Naive thymus-derived CD4-positive, alpha-beta T cell (primary cell): ENCODE measurements at regions of chr1 and their contacts with region 1.

Region 1: DNA sequence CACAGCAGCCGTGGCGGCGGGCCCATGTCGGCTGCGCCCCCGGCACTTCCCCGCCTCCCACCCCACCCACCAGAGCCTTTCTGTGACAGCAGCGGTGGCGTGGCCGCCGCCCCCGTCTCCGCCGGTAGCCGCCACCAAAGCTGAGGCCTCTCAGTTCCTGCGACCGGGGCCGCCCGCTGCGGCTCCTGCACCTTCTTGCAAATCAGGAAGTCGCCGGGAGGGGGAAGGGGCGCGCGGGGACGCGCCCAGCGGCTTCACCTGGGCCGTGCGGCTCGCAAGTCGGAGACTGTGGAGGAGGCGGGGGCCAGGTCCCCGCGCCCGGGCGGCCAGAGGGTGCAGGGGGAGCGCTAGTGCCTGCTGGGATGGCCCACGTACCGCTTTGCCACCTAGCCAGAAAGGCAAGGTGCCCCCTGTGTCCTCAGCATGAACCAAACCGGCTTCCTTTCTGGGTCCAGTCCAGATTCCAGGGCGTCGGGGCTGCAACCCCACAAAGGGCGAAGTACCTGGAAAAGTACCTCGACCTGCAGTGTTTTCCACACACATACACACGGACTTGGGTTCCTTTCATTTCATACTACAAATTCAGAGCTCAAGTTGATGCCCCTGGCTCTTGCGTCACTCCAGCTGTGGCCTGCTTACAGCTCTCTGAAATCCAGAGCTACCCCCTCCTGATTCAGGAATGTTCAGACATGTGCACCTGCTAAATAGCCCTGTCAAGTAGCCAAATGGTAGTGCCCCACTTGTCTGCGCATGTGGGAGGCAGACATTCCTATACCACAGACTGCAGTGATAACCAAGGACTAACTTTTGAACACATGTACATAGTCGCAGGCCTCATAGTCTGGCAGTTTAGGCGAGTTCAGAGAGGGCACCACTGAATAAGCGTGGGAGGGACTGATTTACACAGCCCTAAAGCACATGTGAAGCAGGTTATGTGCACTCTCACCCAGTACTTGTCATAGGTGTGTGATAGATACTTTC is at the start of gene DENND1B:
- DNase-seq: peak; percentile 64 to 83 (median 81)
- ATAC-seq: peak; percentile 80
- H3K4me3 ChIP-seq: peak within 1 kb of the TSS; percentile 68
- H3K4me3 Mint-ChIP-seq: peak within 1 kb of the TSS; percentile 87 to 98 (median 92)
- H3K27ac ChIP-seq: peak within 1 kb of the TSS; percentile 74
- H3K27ac Mint-ChIP-seq: peak within 1 kb of the TSS; percentile 90 to 98 (median 97)
- H3K4me1 ChIP-seq: peaks cover 19 to 34% of the 10 kb centered on the region in 2 donors
- H3K4me1 Mint-ChIP-seq: peaks cover 32 to 72% (median 62%) of the 10 kb centered on the region in 7 donors
- H3K27me3 ChIP-seq: no peaks in the 10 kb centered on the region
- H3K27me3 Mint-ChIP-seq: no peaks in the 10 kb centered on the region
- total RNA-seq, gene DENND1B: 14.2 to 28.7 (median 23.2) TPM

Region 2: GRCh38 chr1:197521118-197521739 is 254.3 kb before region 1 on chr1:
- CTCF ChIA-PET with region 1: no interaction called
- POLR2A ChIA-PET with region 1: no interaction called
- intact Hi-C with region 1: loop called in 1 of 2 experiments (anchors 5 kb)
- DNase-seq: peak in 7 of 9 donors; percentile 2 to 34 (median 24)
- ATAC-seq: no peak
- H3K4me3 ChIP-seq: no peak overlapping the region
- H3K4me3 Mint-ChIP-seq: no peak overlapping the region
- H3K27ac ChIP-seq: no peak overlapping the region
- H3K27ac Mint-ChIP-seq: no peak overlapping the region
- H3K4me1 ChIP-seq: no peaks in the 10 kb centered on the region
- H3K4me1 Mint-ChIP-seq: peaks cover 0 to 5% (median 0%) of the 10 kb centered on the region in 7 donors
- H3K27me3 ChIP-seq: no peaks in the 10 kb centered on the region
- H3K27me3 Mint-ChIP-seq: no peaks in the 10 kb centered on the region

Region 3: GRCh38 chr1:197733324-197733723 is 42.2 kb before region 1 on chr1:
- CTCF ChIA-PET with region 1: no interaction called
- POLR2A ChIA-PET with region 1: no interaction called
- intact Hi-C with region 1: loop called in 1 of 2 experiments (anchors 5 kb)
- DNase-seq: no peak
- ATAC-seq: no peak
- H3K4me3 ChIP-seq: no peak overlapping the region
- H3K4me3 Mint-ChIP-seq: no peak overlapping the region
- H3K27ac ChIP-seq: no peak overlapping the region
- H3K27ac Mint-ChIP-seq: peak overlapping the region in 1 of 9 donors; percentile 15
- H3K4me1 ChIP-seq: no peaks in the 10 kb centered on the region
- H3K4me1 Mint-ChIP-seq: peaks cover 7 to 59% (median 35%) of the 10 kb centered on the region in 7 donors
- H3K27me3 ChIP-seq: no peaks in the 10 kb centered on the region
- H3K27me3 Mint-ChIP-seq: no peaks in the 10 kb centered on the region

Region 4: DNA sequence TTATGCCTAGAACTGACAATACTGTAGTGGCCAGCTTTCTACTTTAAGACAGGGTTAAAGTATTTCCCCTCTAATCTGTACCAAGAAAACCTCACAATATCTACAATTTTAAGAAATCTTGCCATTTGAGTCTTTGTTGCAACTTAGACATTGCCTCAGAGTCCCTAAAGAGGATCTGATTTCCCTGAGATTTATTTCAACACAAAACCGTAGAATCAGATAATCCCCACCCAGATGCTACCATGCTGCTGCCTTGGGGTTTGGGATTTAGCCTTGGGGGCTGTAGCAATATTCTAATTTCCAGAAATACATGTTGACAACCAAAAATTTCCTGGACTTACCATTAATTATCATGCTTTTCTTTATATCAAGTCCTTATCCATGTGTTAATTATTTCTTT is 50.0 kb after region 1 on chr1:
- CTCF ChIA-PET with region 1: no interaction called
- POLR2A ChIA-PET with region 1: no interaction called
- intact Hi-C with region 1: loop called in 1 of 2 experiments (anchors 5 kb)
- DNase-seq: no peak
- ATAC-seq: no peak
- H3K4me3 ChIP-seq: no peak overlapping the region
- H3K4me3 Mint-ChIP-seq: no peak overlapping the region
- H3K27ac ChIP-seq: no peak overlapping the region
- H3K27ac Mint-ChIP-seq: no peak overlapping the region
- H3K4me1 ChIP-seq: no peaks in the 10 kb centered on the region
- H3K4me1 Mint-ChIP-seq: no peaks in the 10 kb centered on the region
- H3K27me3 ChIP-seq: no peaks in the 10 kb centered on the region
- H3K27me3 Mint-ChIP-seq: peaks cover 0 to 21% (median 0%) of the 10 kb centered on the region in 5 donors

Region 5: GRCh38 chr1:197902454-197903195 is 127.1 kb after region 1 on chr1 and contains the start of gene C1orf53:
- CTCF ChIA-PET with region 1: no interaction called
- POLR2A ChIA-PET with region 1: no interaction called
- intact Hi-C with region 1: loop called (anchors 1 to 2 kb)
- DNase-seq: peak; percentile 58 to 87 (median 74)
- ATAC-seq: peak; percentile 94
- H3K4me3 ChIP-seq: peak within 1 kb of the TSS; percentile 71
- H3K4me3 Mint-ChIP-seq: peak within 1 kb of the TSS; percentile 79 to 97 (median 92)
- H3K27ac ChIP-seq: peak within 1 kb of the TSS; percentile 50
- H3K27ac Mint-ChIP-seq: peak within 1 kb of the TSS; percentile 7 to 82 (median 79)
- H3K4me1 ChIP-seq: peaks cover 4% of the 10 kb centered on the region in 2 donors
- H3K4me1 Mint-ChIP-seq: peaks cover 6 to 19% (median 14%) of the 10 kb centered on the region in 7 donors
- H3K27me3 ChIP-seq: peaks cover 0 to 23% of the 10 kb centered on the region in 2 donors
- H3K27me3 Mint-ChIP-seq: peaks cover 46 to 68% (median 54%) of the 10 kb centered on the region in 5 donors
- total RNA-seq, gene C1orf53: not detected

Region 6: GRCh38 chr1:198520524-198521254 is 745.1 kb after region 1 on chr1:
- CTCF ChIA-PET with region 1: no interaction called
- POLR2A ChIA-PET with region 1: no interaction called
- intact Hi-C with region 1: loop called in 1 of 2 experiments (anchors 5 kb)
- DNase-seq: peak in 3 of 9 donors; percentile 11 to 27 (median 18)
- ATAC-seq: peak; percentile 66
- H3K4me3 ChIP-seq: peak overlapping the region; percentile 44
- H3K4me3 Mint-ChIP-seq: peak overlapping the region; percentile 65 to 79 (median 71)
- H3K27ac ChIP-seq: peak overlapping the region; percentile 81
- H3K27ac Mint-ChIP-seq: peak overlapping the region; percentile 48 to 95 (median 93)
- H3K4me1 ChIP-seq: peaks cover 40 to 48% of the 10 kb centered on the region in 2 donors
- H3K4me1 Mint-ChIP-seq: peaks cover 30 to 77% (median 69%) of the 10 kb centered on the region in 7 donors
- H3K27me3 ChIP-seq: no peaks in the 10 kb centered on the region
- H3K27me3 Mint-ChIP-seq: no peaks in the 10 kb centered on the region